ENCODE measurements at regions of chrX and their contacts with region 1.

Region 1: GRCh38 chrX:96538104-96538727 is 146.4 kb upstream of the DIAPH2 start:
- DNase-seq: no peak
- ATAC-seq: no peak
- H3K4me3 ChIP-seq: no peak overlapping the region
- H3K27ac ChIP-seq: no peak overlapping the region
- H3K4me1 ChIP-seq: no peaks in the 10 kb centered on the region
- H3K27me3 ChIP-seq: no peaks in the 10 kb centered on the region
- CTCF ChIP-seq: no peak
- POLR2A ChIP-seq: no peak
- RAD21 ChIP-seq: no peak

Region 2: DNA sequence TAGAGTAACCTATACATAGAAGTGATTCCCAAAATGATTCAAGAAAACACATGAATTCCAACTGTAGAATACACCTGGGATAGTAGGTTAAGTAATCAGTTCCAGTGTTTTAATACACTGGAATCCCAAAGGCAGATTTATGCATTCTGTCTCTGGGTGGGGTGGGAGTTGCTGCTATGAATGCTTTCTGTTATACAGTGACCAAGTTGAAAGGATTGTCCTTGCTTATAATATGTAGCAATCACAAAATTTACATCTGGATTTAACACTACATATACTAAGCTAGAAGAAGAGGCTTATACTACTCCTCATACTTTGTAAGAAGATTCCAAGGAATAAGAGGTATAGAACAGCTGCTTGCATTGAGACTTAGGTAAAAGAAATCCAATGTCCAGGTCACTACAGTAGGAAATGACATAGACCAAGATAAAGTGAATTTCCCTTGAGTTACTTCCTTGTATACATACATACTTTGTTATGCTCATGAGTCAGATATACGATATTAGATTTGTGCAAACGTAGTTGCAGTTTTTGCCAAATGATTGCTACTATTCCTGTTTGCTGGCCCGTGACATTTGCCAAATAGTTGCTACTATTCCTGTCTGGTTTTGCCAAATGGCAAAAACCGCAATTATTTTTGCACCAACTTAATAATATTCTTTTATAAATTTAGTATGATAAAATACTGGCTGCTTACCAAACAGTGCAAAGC is 64.0 kb before region 1 on chrX:
- CTCF ChIA-PET with region 1: no interaction called
- POLR2A ChIA-PET with region 1: no interaction called
- dilution Hi-C with region 1: no loop called
- in situ Hi-C with region 1: loop called (anchors 10 kb)
- intact Hi-C with region 1: no loop called
- DNase-seq: peak; percentile 72
- ATAC-seq: peak; percentile 53
- H3K4me3 ChIP-seq: no peak overlapping the region
- H3K27ac ChIP-seq: no peak overlapping the region
- H3K4me1 ChIP-seq: no peaks in the 10 kb centered on the region
- H3K27me3 ChIP-seq: no peaks in the 10 kb centered on the region; the same call in 1 of the 2 replicates
- CTCF ChIP-seq: no peak
- POLR2A ChIP-seq: no peak
- RAD21 ChIP-seq: no peak